Heart left ventricle (tissue), 16 donors: ENCODE measurements at regions of chr15 and their contacts with region 1.

Region 1: DNA sequence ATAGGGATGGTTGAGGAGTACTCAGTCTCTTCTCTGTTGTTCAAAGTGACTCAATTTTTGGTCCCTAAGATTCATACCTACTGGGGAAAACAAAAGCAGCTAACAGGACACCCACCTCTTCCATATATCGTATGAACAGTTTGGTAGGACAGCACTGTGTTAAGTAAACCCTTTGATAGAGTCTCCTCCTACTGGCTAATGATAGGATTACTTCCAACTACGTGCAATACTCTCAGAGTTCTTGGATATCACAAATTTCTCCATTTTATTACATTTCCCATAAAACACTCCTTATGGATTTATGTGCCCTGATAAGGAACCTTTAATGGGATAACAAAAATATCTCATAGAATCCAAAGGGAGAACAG is 200.2 kb upstream of the GOLGA6L4 start:
- DNase-seq: no peak
- ATAC-seq: peak; percentile 55 to 67 (median 62)
- H3K4me3 ChIP-seq: no peak overlapping the region
- H3K27ac ChIP-seq: no peak overlapping the region
- H3K4me1 ChIP-seq: no peaks in the 10 kb centered on the region
- H3K27me3 ChIP-seq: no peaks in the 10 kb centered on the region
- CTCF ChIP-seq: peak; percentile 18 to 57 (median 46)
- POLR2A ChIP-seq: no peak

Region 2: DNA sequence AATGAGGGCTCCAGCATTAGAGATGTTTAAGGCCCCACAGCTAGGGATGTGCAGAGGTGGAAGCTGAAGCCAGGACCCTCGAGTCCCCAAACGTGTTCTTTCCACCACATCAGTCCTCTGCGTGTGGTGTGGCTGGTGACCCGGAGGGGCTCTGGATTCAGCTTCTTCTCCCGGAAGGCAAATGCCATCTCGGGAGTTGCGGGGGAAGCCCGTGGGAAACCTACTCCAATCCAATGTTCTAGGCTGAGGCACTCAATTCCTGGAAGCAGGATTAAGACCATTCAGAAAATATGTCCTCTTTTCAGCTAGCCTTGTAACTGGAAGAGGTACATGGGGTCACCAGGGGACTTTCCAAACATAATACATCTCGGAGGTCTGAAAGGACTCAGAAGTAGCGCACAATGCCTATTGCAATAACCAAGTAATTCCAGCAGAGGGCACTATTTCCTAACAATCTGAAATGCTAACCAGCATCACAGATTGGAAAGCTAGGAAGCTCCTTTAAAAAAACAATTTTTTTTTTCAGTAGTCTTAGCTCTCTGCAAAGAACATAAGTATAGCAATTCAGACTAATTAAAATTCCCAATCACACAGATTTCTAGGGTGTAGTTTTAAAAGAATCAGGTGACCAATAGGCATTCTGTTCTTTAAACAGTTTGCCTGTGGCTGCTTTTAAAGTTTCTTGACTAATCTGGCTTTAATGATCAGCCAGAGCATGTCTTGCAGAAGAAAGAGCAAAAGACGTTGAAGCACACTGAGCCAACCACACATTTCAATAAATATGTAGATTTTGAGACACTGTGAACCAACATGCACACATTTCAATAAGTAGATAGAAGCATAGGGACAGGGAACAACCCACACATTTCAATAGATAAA is 787.0 kb before region 1 on chr15:
- intact Hi-C with region 1: loop called in 1 of 10 experiments (anchors 10 kb)
- DNase-seq: peak in 2 of 5 donors; percentile 11 to 19
- ATAC-seq: peak in 1 of 4 donors; percentile 54
- H3K4me3 ChIP-seq: no peak overlapping the region
- H3K27ac ChIP-seq: no peak overlapping the region
- H3K4me1 ChIP-seq: peaks cover 0 to 3% (median 0%) of the 10 kb centered on the region in 12 donors
- H3K27me3 ChIP-seq: peaks cover 7 to 38% (median 24%) of the 10 kb centered on the region in 9 donors
- CTCF ChIP-seq: peak; percentile 85 to 96 (median 94)
- POLR2A ChIP-seq: no peak

Region 3: GRCh38 chr15:83443076-83443847 is 592.1 kb before region 1 on chr15:
- intact Hi-C with region 1: loop called in 4 of 10 experiments (anchors 5 to 10 kb)
- DNase-seq: no peak
- ATAC-seq: no peak
- H3K4me3 ChIP-seq: no peak overlapping the region
- H3K27ac ChIP-seq: no peak overlapping the region
- H3K4me1 ChIP-seq: peaks cover 0 to 16% (median 8%) of the 10 kb centered on the region in 12 donors
- H3K27me3 ChIP-seq: peaks cover 0 to 26% (median 9%) of the 10 kb centered on the region in 9 donors
- CTCF ChIP-seq: no peak
- POLR2A ChIP-seq: no peak

Region 4: GRCh38 chr15:83571820-83572707 is 463.3 kb before region 1 on chr15:
- intact Hi-C with region 1: loop called in 6 of 10 experiments (anchors 5 to 10 kb)
- DNase-seq: no peak
- ATAC-seq: no peak
- H3K4me3 ChIP-seq: no peak overlapping the region
- H3K27ac ChIP-seq: no peak overlapping the region
- H3K4me1 ChIP-seq: no peaks in the 10 kb centered on the region
- H3K27me3 ChIP-seq: no peaks in the 10 kb centered on the region
- CTCF ChIP-seq: peak; percentile 37 to 68 (median 50)
- POLR2A ChIP-seq: no peak

Region 5: GRCh38 chr15:83734487-83734886 is 300.9 kb before region 1 on chr15:
- intact Hi-C with region 1: loop called in 8 of 10 experiments (anchors 5 to 10 kb)
- DNase-seq: peak in 1 of 5 donors; percentile 26
- ATAC-seq: peak in 1 of 4 donors; percentile 55
- H3K4me3 ChIP-seq: no peak overlapping the region
- H3K27ac ChIP-seq: no peak overlapping the region
- H3K4me1 ChIP-seq: no peaks in the 10 kb centered on the region
- H3K27me3 ChIP-seq: no peaks in the 10 kb centered on the region
- CTCF ChIP-seq: peak in 9 of 12 donors; percentile 17 to 41 (median 33)
- POLR2A ChIP-seq: no peak

Region 6: DNA sequence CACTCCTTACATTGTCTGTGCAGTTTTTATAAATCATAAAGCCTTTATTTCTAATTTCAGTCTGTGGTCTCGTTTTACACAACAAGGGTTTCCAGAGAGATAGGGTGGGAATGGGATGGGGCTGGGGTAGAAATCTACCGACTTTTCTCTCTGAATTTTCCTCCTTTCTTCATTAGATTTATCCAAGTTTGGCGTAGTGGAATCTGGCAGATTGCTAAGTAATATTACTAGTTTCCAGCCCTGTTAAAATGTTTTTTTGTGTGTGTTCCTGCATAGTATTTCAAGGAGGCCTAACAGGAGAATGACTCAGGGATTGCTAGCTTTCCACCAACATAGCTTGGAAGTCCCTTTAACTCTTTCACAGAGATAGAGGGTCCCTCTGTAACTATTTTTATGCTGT is 14.7 kb after region 1 on chr15:
- intact Hi-C with region 1: no loop called
- DNase-seq: no peak
- ATAC-seq: no peak
- H3K4me3 ChIP-seq: no peak overlapping the region
- H3K27ac ChIP-seq: no peak overlapping the region
- H3K4me1 ChIP-seq: no peaks in the 10 kb centered on the region
- H3K27me3 ChIP-seq: no peaks in the 10 kb centered on the region
- CTCF ChIP-seq: no peak
- POLR2A ChIP-seq: no peak